ENCODE measurements at regions of chr9 and their contacts with region 1.

Region 1: GRCh38 chr9:92974761-92975479 is 27.6 kb downstream of the FGD3 start:
- DNase-seq: no peak
- H3K4me3 ChIP-seq: no peak overlapping the region
- H3K27ac ChIP-seq: no peak overlapping the region
- H3K4me1 ChIP-seq: peaks cover 7% of the 10 kb centered on the region
- H3K27me3 ChIP-seq: no peaks in the 10 kb centered on the region
- CTCF ChIP-seq: no peak

Region 2: DNA sequence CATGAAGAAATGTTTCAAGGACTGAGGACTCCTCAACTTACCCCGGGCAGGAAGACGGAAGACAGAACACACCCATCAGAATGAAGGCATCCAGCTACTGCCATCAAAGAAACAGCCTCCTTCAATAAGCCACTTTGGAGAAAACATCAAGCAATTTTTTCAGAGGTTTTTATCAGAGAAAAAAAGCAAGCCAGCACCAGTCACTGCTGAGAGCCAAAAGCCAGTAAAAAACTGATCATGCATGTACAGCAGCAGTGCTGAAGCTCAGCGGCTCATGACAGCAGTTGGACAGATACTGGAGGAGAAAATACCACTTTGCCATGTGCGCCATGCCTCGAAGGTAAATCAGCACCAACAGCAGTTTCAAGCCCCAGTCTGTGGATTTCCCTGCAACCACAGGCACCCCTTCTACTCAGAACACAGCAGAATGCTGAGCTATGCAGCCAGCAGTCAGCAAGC is 87.0 kb before region 1 on chr9:
- CTCF ChIA-PET with region 1: no interaction called
- dilution Hi-C with region 1: loop called (anchors 5 kb)
- in situ Hi-C with region 1: no loop called
- intact Hi-C with region 1: no loop called
- DNase-seq: no peak
- H3K4me3 ChIP-seq: no peak overlapping the region
- H3K27ac ChIP-seq: no peak overlapping the region
- H3K4me1 ChIP-seq: no peaks in the 10 kb centered on the region
- H3K27me3 ChIP-seq: peaks cover 2% of the 10 kb centered on the region
- CTCF ChIP-seq: no peak

Region 3: GRCh38 chr9:92911511-92912475 is 63.1 kb before region 1 on chr9:
- CTCF ChIA-PET with region 1: no interaction called
- dilution Hi-C with region 1: no loop called
- in situ Hi-C with region 1: no loop called
- intact Hi-C with region 1: no loop called
- DNase-seq: peak; percentile 15
- H3K4me3 ChIP-seq: no peak overlapping the region
- H3K27ac ChIP-seq: no peak overlapping the region
- H3K4me1 ChIP-seq: no peaks in the 10 kb centered on the region
- H3K27me3 ChIP-seq: peaks cover 2% of the 10 kb centered on the region
- CTCF ChIP-seq: no peak